Activated T-helper 2 cell treated with anti-CD3 and anti-CD28 coated beads, Interferon-gamma antibody, Interleukin-2, Interleukin-4, amounts not matched to agents 10 μg/mL and 5 μg/mL and 100 μg/mL, durations not matched to agents 14 hours and 24 hours and 36 hours (primary cell): ENCODE measurements at regions of chr4 and their contacts with region 1.

Region 1: GRCh38 chr4:108118490-108118889 is 50.2 kb downstream of the LEF1 start:
- DNase-seq: no peak
- H3K4me3 Mint-ChIP-seq: peak overlapping the region; percentile 38
- H3K27ac Mint-ChIP-seq: peak overlapping the region; percentile 71
- H3K4me1 Mint-ChIP-seq: peaks cover 80% of the 10 kb centered on the region
- H3K27me3 Mint-ChIP-seq: no peaks in the 10 kb centered on the region

Region 2: GRCh38 chr4:108100827-108101226 is 17.7 kb before region 1 on chr4:
- intact Hi-C with region 1: loop called (anchors 2 kb)
- DNase-seq: no peak
- H3K4me3 Mint-ChIP-seq: no peak overlapping the region
- H3K27ac Mint-ChIP-seq: no peak overlapping the region
- H3K4me1 Mint-ChIP-seq: peaks cover 62% of the 10 kb centered on the region
- H3K27me3 Mint-ChIP-seq: no peaks in the 10 kb centered on the region

Region 3: DNA sequence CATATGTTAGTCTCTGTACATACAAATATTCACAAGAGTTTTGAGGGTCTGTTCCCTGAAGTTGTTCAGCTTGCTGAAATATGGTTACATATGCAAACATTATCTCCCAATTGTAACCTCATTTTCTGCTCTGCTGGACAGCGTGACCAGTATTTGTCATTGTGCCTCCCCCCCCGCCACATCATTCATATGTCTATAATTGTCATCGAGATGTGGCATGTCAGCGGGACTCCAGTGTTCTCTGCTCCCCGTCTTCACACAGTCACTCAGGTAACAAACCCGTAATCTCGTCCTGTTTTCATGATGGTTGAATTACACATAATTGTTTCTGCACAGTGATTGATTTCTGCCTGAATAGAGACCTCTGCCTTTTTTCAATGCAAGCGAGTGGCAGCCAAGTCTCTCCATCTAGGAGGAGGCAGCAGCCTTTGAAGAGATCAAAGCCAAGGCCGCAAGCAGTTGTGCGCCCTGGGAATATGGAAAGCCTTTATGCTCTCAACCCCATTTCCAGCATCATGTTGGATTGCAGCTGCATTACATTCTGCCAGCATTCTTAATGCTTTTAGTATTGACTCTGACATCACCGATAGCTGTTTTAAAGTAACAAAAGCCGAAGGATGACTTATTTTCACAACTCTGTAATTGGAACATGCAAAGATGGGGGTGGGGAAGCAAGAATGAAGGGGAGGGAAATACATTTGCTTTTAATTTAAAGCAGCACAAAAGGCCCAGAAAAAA is 22.9 kb after region 1 on chr4:
- intact Hi-C with region 1: loop called (anchors 1 kb)
- DNase-seq: no peak
- H3K4me3 Mint-ChIP-seq: peak overlapping the region; percentile 72
- H3K27ac Mint-ChIP-seq: peak overlapping the region; percentile 65
- H3K4me1 Mint-ChIP-seq: peaks cover 81% of the 10 kb centered on the region
- H3K27me3 Mint-ChIP-seq: no peaks in the 10 kb centered on the region

Region 4: GRCh38 chr4:108166441-108167315 is 48.2 kb after region 1 on chr4:
- intact Hi-C with region 1: loop called (anchors 1 kb)
- DNase-seq: peak; percentile 66
- H3K4me3 Mint-ChIP-seq: peak overlapping the region; percentile 97
- H3K27ac Mint-ChIP-seq: peak overlapping the region; percentile 94
- H3K4me1 Mint-ChIP-seq: peaks cover 55% of the 10 kb centered on the region
- H3K27me3 Mint-ChIP-seq: peaks cover 22% of the 10 kb centered on the region

Region 5: GRCh38 chr4:108433832-108434231 is 315.3 kb after region 1 on chr4:
- intact Hi-C with region 1: loop called (anchors 2 kb)
- DNase-seq: peak; percentile 47
- H3K4me3 Mint-ChIP-seq: no peak overlapping the region
- H3K27ac Mint-ChIP-seq: peak overlapping the region; percentile 77
- H3K4me1 Mint-ChIP-seq: peaks cover 32% of the 10 kb centered on the region
- H3K27me3 Mint-ChIP-seq: peaks cover 5% of the 10 kb centered on the region

Region 6: GRCh38 chr4:108620101-108620932 is 501.8 kb after region 1 on chr4 and contains the start of gene RPL34:
- intact Hi-C with region 1: loop called (anchors 5 kb)
- DNase-seq: peak; percentile 95
- H3K4me3 Mint-ChIP-seq: peak within 1 kb of the TSS; percentile 99
- H3K27ac Mint-ChIP-seq: peak within 1 kb of the TSS; percentile 95
- H3K4me1 Mint-ChIP-seq: peaks cover 38% of the 10 kb centered on the region
- H3K27me3 Mint-ChIP-seq: no peaks in the 10 kb centered on the region
- total RNA-seq, gene RPL34: 1,375 and 1,412 TPM in 2 replicates